Mucosa of descending colon (tissue), 3 donors: ENCODE measurements at regions of chr3 and their contacts with region 1.

Region 1: DNA sequence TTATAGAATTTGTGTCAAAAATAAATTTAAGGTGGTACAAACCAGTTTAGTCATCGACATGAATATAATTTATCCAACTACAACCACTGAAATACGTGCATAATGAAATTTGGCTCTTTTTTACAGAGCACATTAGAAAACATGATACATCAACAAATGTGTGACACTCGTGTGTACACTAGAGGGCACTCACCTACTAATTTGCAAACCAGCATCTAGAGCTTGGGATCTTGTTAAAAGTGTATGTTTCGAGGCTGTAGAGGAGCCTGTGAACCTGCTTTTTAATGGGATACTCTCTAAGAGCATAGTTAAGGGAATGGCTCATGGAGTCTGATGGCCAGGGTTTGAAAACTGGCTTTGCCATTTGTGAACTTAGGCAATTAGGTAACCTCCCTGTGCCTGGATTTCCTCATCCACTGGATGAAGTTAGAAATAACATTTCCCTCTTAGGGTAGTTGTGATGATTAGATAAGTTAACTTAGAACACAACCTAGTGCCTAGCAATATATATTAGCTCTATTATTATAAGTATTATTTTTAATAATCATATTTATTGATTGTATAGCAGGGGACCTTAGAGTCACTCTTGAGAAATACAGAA is 8.8 kb upstream of the CPOX start:
- DNase-seq: peak in 1 of 3 donors; percentile 55
- ATAC-seq: peak; percentile 73
- H3K4me3 ChIP-seq: no peak overlapping the region
- H3K4me1 ChIP-seq: no peaks in the 10 kb centered on the region
- CTCF ChIP-seq: peak; percentile 33

Region 2: DNA sequence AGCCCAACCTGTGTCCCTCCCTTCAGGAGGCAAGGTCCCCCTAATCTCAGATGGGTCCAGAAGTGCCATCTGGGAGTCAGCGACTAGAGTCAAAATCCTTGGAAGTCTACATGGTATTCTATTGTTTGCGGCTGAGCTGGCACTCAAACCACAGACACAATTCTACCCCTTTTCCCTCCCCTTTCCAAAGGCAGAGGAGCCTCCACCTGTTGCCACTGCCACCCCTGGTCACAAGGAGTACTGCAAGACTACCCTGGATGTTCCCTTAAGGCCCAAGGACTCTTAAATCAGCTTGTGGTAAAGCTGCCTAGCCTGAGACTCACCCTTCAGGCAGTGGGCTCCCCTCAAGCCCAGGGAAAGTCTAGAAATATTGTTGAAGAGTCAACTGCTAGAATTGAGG is 342.5 kb before region 1 on chr3:
- intact Hi-C with region 1: no loop called
- DNase-seq: no peak
- ATAC-seq: no peak
- H3K4me3 ChIP-seq: no peak overlapping the region
- H3K4me1 ChIP-seq: no peaks in the 10 kb centered on the region
- CTCF ChIP-seq: no peak

Region 3: GRCh38 chr3:98817547-98818041 is 215.4 kb after region 1 on chr3:
- intact Hi-C with region 1: loop called (anchors 5 kb)
- DNase-seq: no peak
- ATAC-seq: peak; percentile 71
- H3K4me3 ChIP-seq: no peak overlapping the region
- H3K4me1 ChIP-seq: no peaks in the 10 kb centered on the region
- CTCF ChIP-seq: peak; percentile 37

Region 4: GRCh38 chr3:98994128-98994762 is 392.1 kb after region 1 on chr3:
- intact Hi-C with region 1: loop called in 1 of 2 experiments (anchors 10 kb)
- DNase-seq: no peak
- ATAC-seq: no peak
- H3K4me3 ChIP-seq: no peak overlapping the region
- H3K4me1 ChIP-seq: no peaks in the 10 kb centered on the region
- CTCF ChIP-seq: peak; percentile 15